Upper lobe of right lung (tissue), 1 donor: ENCODE measurements at regions of chr19 and their contacts with region 1.

Region 1: DNA sequence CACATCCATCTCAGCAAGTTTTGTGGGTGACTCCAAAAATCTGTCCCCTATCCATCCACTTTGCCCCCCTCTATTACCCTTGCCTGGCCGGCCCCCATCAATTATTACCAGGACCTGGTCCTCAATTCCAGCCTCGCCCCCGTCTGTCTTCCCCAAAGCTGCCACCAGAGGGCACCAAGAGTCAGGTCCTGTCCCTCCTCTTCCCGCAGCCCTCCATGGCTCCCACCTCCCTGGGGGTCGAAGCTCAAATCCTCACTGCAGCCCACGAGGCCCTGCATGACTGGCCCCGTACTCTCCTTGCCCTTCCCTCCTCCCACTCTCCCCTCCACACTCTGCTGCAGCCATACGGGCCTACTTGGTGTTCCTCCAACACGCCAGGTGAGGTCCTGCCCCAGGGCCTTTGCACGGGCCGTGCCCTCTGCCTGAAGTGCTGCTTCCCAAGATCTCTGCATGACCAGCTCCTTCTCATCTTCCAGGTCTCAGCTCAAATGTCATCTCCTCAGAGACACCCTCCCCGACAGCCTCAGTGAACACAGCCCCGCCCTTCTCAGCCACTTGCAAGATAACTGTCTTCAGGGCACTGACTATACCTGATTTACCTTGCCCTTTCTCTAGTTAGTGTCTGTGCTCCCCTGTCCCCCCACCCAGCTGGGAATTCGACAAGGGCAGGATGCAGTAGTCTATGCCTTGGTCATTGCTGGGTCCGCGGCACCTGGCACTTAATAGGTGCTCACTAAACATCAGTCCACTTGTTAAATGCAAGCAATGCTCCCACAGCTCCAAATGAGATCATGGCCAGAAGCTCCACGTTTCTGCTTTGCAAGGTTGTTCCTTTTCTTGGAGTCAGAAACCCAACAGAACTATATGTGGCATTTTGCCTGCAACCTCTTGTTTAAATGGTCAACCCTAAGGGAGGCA is 16.8 kb upstream of the SEMA6B start:
- DNase-seq: peak; percentile 80
- ATAC-seq: peak; percentile 73
- H3K4me3 ChIP-seq: no peak overlapping the region
- H3K27ac ChIP-seq: no peak overlapping the region
- H3K4me1 ChIP-seq: peaks cover 10% of the 10 kb centered on the region
- H3K27me3 ChIP-seq: peaks cover 42% of the 10 kb centered on the region
- CTCF ChIP-seq: peak; percentile 67

Region 2: DNA sequence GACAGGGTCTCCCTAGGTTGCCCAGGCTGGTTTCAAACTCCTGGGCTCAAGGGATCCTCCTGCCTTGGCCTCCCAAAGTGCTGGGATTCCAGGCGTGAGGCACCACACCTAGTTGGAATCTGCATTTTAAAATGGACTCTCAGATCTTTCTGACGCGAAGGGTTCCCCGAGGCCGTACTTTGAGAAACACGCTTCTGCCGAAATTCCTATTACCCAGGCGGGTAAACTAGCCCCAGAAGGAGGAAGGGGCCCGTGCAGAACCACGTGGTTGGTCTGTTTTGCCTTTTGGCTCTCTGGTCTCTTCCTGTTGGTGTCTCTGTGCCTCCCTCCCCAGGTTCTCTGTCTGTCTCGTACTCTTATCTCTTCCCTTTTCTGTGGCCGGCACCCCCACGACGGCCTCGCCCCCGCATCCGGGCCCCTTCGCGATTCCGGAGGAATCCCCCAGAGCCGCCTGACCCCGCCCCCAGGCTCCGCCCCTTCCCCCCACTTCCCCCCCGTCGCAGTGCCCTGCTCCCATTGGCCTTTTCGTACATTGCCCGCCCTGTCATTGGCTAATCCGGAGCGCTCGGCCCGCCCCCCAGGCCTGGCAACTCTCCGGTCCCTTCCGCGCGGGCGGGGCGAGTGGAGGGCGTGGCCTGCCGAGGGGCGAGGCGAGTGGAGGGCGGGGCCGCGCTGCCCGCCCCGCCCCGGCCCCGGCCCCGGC is 62.7 kb after region 1 on chr19 and contains the start of gene TNFAIP8L1:
- intact Hi-C with region 1: loop called (anchors 10 kb)
- DNase-seq: peak; percentile 98
- ATAC-seq: peak; percentile 97
- H3K4me3 ChIP-seq: peak within 1 kb of the TSS; percentile 71
- H3K27ac ChIP-seq: peak within 1 kb of the TSS; percentile 78
- H3K4me1 ChIP-seq: peaks cover 20% of the 10 kb centered on the region
- H3K27me3 ChIP-seq: no peaks in the 10 kb centered on the region
- CTCF ChIP-seq: no peak
- total RNA-seq, gene TNFAIP8L1: 11.9 TPM